Activated CD4-positive, alpha-beta memory T cell treated with anti-CD3 and anti-CD28 coated beads, Interleukin-2, amount 10 ng/mL, durations not matched to agents 7 days and 5 days (primary cell): ENCODE measurements at regions of chr1 and their contacts with region 1.

Region 1: DNA sequence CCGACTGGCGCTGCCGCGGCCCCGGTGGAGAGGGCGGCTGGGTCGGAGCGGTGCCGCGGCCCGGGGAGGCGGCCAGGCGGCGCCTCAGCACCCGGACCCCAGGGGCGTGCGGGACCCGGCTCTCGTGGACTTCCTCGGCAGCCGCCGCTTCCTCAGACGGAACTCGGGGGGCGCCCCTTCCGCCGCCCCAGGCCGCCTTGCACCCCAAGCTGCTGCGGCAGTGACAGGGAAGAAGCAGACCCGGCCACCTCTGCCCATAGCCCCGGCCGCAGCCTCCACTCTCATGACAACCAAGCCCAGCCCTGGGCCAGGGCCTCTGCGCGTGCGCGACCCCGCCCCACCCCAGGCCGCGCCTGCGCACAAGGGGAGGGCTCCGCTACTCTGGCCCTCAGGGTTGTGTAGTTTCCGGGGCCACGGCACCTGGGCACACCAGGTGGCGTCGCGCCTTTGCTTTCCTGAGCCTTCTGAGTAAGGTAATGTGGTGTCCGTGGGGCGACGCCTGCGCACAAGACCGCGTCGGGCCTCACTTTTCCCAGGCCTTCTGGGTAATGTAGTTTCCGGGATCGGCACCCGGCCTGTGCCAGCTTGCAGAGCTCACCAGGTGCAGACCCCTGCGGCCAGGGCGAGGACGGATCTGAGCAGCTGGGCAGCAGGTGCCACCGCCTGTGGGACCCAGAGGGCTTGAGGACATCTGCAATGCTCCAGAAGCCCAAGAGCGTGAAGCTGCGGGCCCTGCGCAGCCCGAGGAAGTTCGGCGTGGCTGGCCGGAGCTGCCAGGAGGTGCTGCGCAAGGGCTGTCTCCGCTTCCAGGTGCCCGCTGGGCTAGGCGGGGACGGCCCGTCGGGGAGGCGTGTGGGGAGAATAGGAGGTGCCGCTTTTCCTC is at the starts of genes CEP104 and DFFB:
- DNase-seq: peak; percentile 97
- H3K4me3 Mint-ChIP-seq: peak within 1 kb of the TSS; percentile 84
- H3K27ac Mint-ChIP-seq: peak within 1 kb of the TSS; percentile 72
- H3K4me1 Mint-ChIP-seq: peaks cover 33% of the 10 kb centered on the region
- H3K27me3 Mint-ChIP-seq: no peaks in the 10 kb centered on the region
- total RNA-seq, gene CEP104: 43.0 to 46.0 TPM
- total RNA-seq, gene DFFB: 9.0 to 9.5 TPM

Region 2: GRCh38 chr1:3775490-3776230 is 81.5 kb before region 1 on chr1:
- CTCF ChIA-PET with region 1: no interaction called
- POLR2A ChIA-PET with region 1: no interaction called
- DNase-seq: peak; percentile 57
- H3K4me3 Mint-ChIP-seq: no peak overlapping the region
- H3K27ac Mint-ChIP-seq: no peak overlapping the region
- H3K4me1 Mint-ChIP-seq: peaks cover 3% of the 10 kb centered on the region
- H3K27me3 Mint-ChIP-seq: no peaks in the 10 kb centered on the region

Region 3: DNA sequence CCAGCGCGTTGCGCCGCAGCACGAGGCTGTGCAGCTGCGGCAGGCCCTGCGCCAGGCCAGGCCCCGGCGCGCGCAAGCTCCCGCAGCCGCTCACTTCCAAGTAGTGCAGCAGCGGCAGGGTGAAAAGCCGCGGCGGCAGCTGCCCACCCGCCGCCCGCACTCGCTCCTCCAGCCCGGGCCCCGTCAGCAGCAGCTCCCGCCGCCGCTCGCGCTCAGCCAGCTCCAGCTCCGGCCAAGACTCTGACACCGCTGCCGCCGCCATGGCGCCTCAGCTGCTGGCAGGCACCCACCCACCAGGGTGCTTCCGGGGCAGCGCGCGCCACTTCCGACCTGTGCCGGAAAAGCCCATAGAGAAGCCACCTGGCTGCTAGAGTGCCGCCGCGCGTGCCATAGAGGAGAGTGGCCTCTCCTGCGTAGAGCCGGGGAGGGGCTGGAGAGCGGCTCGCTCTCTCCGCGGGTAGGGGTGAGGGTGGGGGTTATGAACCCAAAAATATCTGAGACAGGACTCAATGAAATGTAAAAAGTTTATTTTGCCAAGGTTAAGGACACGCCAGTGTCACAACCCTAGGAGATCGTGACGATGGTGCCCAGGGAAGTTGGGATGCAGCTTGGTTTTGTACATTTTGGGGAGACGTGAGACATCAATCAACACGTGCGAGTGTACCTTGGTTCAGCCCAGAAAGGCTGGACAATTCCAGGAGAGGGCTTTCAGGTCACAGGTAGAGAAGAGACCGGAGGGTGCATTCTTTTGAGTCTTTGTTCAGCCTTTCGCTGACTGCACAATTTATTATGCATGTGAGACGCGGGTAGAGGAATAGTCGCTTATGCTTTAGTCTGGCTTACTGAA is 60.7 kb before region 1 on chr1 and contains the start of gene LRRC47:
- CTCF ChIA-PET with region 1: interaction called, 6 read pairs
- POLR2A ChIA-PET with region 1: interaction called, 11 read pairs
- DNase-seq: peak; percentile 95
- H3K4me3 Mint-ChIP-seq: peak within 1 kb of the TSS; percentile 86
- H3K27ac Mint-ChIP-seq: peak within 1 kb of the TSS; percentile 77
- H3K4me1 Mint-ChIP-seq: peaks cover 46% of the 10 kb centered on the region
- H3K27me3 Mint-ChIP-seq: peaks cover 2% of the 10 kb centered on the region
- total RNA-seq, gene LRRC47: 32.4 to 33.5 TPM

Region 4: DNA sequence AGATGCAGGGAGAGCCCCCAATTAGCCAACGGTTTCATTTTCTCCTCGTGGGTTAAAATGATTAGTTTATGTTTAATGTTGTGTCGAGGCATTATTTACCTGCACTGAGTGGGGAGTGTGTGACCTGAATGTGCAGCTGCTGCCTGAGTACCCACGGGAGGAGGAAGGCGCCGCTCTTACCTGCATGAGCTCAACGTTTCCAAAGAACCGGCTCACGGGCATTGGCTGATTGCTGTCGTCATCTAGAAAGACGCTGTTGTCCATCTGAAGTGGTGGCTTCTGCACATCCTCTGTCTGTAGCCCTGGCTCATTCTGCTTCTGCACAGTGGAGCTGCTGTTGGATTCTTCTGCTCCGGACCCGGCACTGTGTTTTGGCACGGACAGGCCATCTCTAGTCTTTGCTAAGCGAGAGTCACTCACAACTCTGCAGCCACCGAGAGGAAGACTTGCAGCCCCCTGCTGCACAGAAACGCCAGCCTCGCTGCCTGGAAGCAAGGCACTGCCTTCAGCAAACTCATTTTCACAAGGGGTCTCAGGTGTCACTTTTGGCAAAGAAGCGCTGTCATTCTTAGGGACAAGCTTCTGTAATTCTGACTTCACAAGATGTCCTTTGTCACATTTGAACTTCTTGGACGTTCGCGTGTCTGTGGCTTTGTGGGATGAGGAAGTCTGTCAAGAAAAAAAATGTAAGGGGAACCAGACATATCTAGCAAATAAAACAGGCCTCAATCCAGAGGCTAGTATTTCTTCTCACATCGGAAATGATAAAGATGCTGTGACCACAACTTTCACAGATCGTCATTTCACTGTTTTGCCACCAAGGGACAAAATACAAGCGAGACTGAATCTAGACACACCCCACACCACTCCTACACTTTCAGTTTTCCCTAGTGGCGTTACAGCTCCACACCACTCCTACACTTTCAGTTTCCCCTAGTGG is 33.5 kb after region 1 on chr1:
- CTCF ChIA-PET with region 1: interaction called, 17 read pairs
- POLR2A ChIA-PET with region 1: interaction called, 3 read pairs
- DNase-seq: no peak
- H3K4me3 Mint-ChIP-seq: peak overlapping the region; percentile 34
- H3K27ac Mint-ChIP-seq: peak overlapping the region; percentile 50
- H3K4me1 Mint-ChIP-seq: peaks cover 24% of the 10 kb centered on the region
- H3K27me3 Mint-ChIP-seq: no peaks in the 10 kb centered on the region

Region 5: GRCh38 chr1:3900119-3900968 is 43.2 kb after region 1 on chr1 and contains the start of gene C1orf174:
- CTCF ChIA-PET with region 1: interaction called, 10 read pairs
- POLR2A ChIA-PET with region 1: interaction called, 21 read pairs
- DNase-seq: peak; percentile 93
- H3K4me3 Mint-ChIP-seq: peak within 1 kb of the TSS; percentile 94
- H3K27ac Mint-ChIP-seq: peak within 1 kb of the TSS; percentile 99
- H3K4me1 Mint-ChIP-seq: peaks cover 50% of the 10 kb centered on the region
- H3K27me3 Mint-ChIP-seq: no peaks in the 10 kb centered on the region
- total RNA-seq, gene C1orf174: 24.1 to 25.5 TPM

Region 6: DNA sequence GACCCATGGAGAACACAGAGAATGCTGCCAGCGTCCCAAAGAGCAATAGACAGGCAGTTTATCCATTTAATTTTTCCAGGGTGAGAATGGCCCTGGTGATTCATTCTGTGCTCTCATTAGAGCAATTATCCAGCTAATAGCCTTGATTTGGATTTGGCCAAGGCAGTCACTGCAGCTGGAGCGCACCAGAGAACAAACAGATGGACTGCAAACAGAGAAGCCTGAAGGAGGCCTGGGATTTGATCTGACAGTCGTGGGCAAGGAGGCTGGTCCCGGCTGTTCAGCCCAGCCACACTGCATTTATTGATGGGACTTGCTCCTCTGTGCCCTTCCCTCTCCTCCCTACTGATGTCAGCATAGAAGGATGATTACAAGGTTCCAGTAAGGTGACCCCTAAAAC is 396.8 kb after region 1 on chr1:
- CTCF ChIA-PET with region 1: no interaction called
- POLR2A ChIA-PET with region 1: no interaction called
- DNase-seq: no peak
- H3K4me3 Mint-ChIP-seq: no peak overlapping the region
- H3K27ac Mint-ChIP-seq: no peak overlapping the region
- H3K4me1 Mint-ChIP-seq: no peaks in the 10 kb centered on the region
- H3K27me3 Mint-ChIP-seq: peaks cover 6% of the 10 kb centered on the region